Ovary (tissue), 10 donors: ENCODE measurements at regions of chr6 and their contacts with region 1.

Region 1: GRCh38 chr6:158474961-158475343 is 84.9 kb upstream of the TMEM181 start:
- DNase-seq: no peak
- H3K4me3 ChIP-seq: no peak overlapping the region
- H3K27ac ChIP-seq: no peak overlapping the region
- H3K4me1 ChIP-seq: no peaks in the 10 kb centered on the region
- H3K27me3 ChIP-seq: no peaks in the 10 kb centered on the region
- CTCF ChIP-seq: no peak
- EP300 ChIP-seq: no peak
- POLR2A ChIP-seq: no peak

Region 2: GRCh38 chr6:158213925-158214674 is 260.9 kb before region 1 on chr6:
- intact Hi-C with region 1: no loop called
- DNase-seq: peak in 4 of 5 donors; percentile 36 to 62 (median 39)
- H3K4me3 ChIP-seq: no peak overlapping the region
- H3K27ac ChIP-seq: no peak overlapping the region
- H3K4me1 ChIP-seq: no peaks in the 10 kb centered on the region
- H3K27me3 ChIP-seq: no peaks in the 10 kb centered on the region
- CTCF ChIP-seq: peak in 2 of 3 donors; percentile 21 to 33
- EP300 ChIP-seq: no peak
- POLR2A ChIP-seq: no peak

Region 3: GRCh38 chr6:158437571-158437970 is 37.4 kb before region 1 on chr6:
- intact Hi-C with region 1: no loop called
- DNase-seq: no peak
- H3K4me3 ChIP-seq: no peak overlapping the region
- H3K27ac ChIP-seq: no peak overlapping the region
- H3K4me1 ChIP-seq: peaks cover 10% of the 10 kb centered on the region
- H3K27me3 ChIP-seq: no peaks in the 10 kb centered on the region
- CTCF ChIP-seq: no peak
- EP300 ChIP-seq: no peak
- POLR2A ChIP-seq: no peak

Region 4: GRCh38 chr6:158718461-158719046 is 243.6 kb after region 1 on chr6:
- intact Hi-C with region 1: no loop called
- DNase-seq: no peak
- H3K4me3 ChIP-seq: no peak overlapping the region
- H3K27ac ChIP-seq: no peak overlapping the region
- H3K4me1 ChIP-seq: no peaks in the 10 kb centered on the region
- H3K27me3 ChIP-seq: no peaks in the 10 kb centered on the region
- CTCF ChIP-seq: no peak
- EP300 ChIP-seq: no peak
- POLR2A ChIP-seq: no peak

Region 5: GRCh38 chr6:159110013-159110412 is 635.1 kb after region 1 on chr6:
- intact Hi-C with region 1: loop called in 1 of 4 experiments (anchors 5 kb)
- DNase-seq: no peak
- H3K4me3 ChIP-seq: no peak overlapping the region
- H3K27ac ChIP-seq: no peak overlapping the region
- H3K4me1 ChIP-seq: no peaks in the 10 kb centered on the region
- H3K27me3 ChIP-seq: no peaks in the 10 kb centered on the region
- CTCF ChIP-seq: peak in 1 of 3 donors; percentile 17
- EP300 ChIP-seq: no peak
- POLR2A ChIP-seq: no peak

Region 6: GRCh38 chr6:159620947-159621346 is 1146.0 kb after region 1 on chr6:
- intact Hi-C with region 1: no loop called
- DNase-seq: no peak
- H3K4me3 ChIP-seq: no peak overlapping the region
- H3K27ac ChIP-seq: no peak overlapping the region
- H3K4me1 ChIP-seq: no peaks in the 10 kb centered on the region
- H3K27me3 ChIP-seq: no peaks in the 10 kb centered on the region
- CTCF ChIP-seq: no peak
- EP300 ChIP-seq: no peak
- POLR2A ChIP-seq: no peak